B cell (primary cell): ENCODE measurements at regions of chr12 and their contacts with region 1.

Region 1: DNA sequence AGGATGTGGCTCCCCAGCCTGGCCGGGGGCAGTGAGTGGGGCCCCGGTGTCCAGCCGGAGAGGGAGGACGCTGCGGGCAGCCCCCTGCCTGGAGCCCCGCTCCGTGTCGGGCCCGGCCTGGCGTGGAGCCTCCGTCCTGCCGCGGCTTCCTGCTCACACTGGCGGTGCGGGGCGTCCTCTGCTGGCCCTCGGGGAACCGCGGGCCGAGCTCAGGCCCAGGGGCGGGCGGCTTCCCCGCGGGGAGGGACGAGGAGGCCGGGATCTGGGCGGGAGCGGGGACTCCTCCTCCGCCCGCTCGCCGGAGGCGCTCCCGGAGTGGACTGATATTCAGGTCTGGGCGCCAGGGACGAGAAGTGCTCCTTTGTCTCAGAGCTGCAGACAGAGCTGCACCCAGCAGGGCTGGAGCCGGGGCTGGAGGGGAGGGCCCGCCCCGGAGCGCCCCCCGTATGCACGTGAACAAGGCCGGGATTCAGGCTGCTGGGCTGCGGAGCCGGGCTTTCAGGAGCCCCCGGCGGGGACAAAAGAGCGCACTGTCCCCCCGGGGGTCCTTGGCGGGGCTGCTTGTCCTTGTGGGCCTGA is 2.2 kb downstream of the MMP17 start:
- DNase-seq: peak; percentile 76
- ATAC-seq: peak; percentile 46
- H3K4me3 ChIP-seq: peak overlapping the region in 4 of 5 experiments; percentile 60 to 75 (median 67)
- H3K4me3 Mint-ChIP-seq: peak overlapping the region; percentile 79
- H3K27ac ChIP-seq: no peak overlapping the region
- H3K27ac Mint-ChIP-seq: peak overlapping the region; percentile 20
- H3K4me1 ChIP-seq: peaks cover 26 to 31% of the 10 kb centered on the region in 2 donors
- H3K4me1 Mint-ChIP-seq: peaks cover 33% of the 10 kb centered on the region
- H3K27me3 ChIP-seq: peaks cover 0 to 17% (median 8%) of the 10 kb centered on the region in 4 experiments
- H3K27me3 Mint-ChIP-seq: peaks cover 14% of the 10 kb centered on the region
- CTCF ChIP-seq: peak; percentile 69

Region 2: DNA sequence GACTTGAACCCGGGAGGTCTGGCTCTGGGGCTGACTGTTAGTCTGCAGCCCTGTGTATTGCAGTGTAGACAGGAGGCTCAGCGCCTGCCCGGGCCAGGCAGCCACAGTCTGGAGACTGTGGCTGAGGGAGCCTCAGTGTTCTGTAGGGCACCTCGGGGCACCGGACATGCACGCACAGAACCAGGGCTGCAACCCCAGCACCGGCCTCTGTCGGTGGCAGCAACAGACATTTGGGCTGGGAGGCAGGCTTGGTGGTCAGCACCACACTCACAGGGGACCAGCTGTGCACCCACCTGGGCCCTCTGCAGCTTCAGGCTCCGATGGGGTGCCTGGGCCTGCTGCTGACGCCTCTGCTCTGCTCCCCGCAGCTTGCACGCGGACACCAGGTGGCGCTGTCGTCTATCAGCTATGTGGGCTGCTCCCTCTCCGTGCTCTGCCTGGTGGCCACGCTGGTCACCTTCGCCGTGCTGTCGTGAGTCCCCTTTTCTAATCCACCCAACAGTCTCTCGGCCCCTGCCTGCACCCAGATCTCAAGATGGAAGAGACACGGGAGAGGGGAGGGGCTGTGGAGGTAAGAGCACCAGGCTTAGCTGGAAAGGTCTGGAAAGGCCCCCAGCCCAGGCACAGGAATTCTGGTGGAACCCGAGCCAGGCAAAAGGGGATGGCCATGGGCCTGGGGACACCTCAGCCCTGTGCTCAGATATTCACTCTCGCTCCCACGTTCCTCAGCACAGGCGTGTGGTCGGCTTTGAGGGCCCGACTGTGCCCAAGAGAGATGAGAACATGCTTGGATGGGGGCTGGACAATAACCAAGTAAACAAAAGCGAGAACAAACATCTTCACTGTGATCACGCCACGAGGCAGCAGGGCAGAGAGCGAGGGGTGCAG is 725.7 kb before region 1 on chr12:
- CTCF ChIA-PET with region 1: interaction called, 32 read pairs
- POLR2A ChIA-PET with region 1: no interaction called
- intact Hi-C with region 1: no loop called
- DNase-seq: peak; percentile 78
- ATAC-seq: peak; percentile 77
- H3K4me3 ChIP-seq: no peak overlapping the region
- H3K4me3 Mint-ChIP-seq: no peak overlapping the region
- H3K27ac ChIP-seq: no peak overlapping the region
- H3K27ac Mint-ChIP-seq: no peak overlapping the region
- H3K4me1 ChIP-seq: peaks cover 14 to 47% of the 10 kb centered on the region in 2 donors
- H3K4me1 Mint-ChIP-seq: peaks cover 17% of the 10 kb centered on the region
- H3K27me3 ChIP-seq: no peaks in the 10 kb centered on the region
- H3K27me3 Mint-ChIP-seq: peaks cover 4% of the 10 kb centered on the region
- CTCF ChIP-seq: peak; percentile 87

Region 3: GRCh38 chr12:131371401-131372170 is 458.8 kb before region 1 on chr12:
- CTCF ChIA-PET with region 1: no interaction called
- POLR2A ChIA-PET with region 1: no interaction called
- intact Hi-C with region 1: no loop called
- DNase-seq: no peak
- ATAC-seq: no peak
- H3K4me3 ChIP-seq: no peak overlapping the region
- H3K4me3 Mint-ChIP-seq: no peak overlapping the region
- H3K27ac ChIP-seq: no peak overlapping the region
- H3K27ac Mint-ChIP-seq: no peak overlapping the region
- H3K4me1 ChIP-seq: no peaks in the 10 kb centered on the region
- H3K4me1 Mint-ChIP-seq: no peaks in the 10 kb centered on the region
- H3K27me3 ChIP-seq: no peaks in the 10 kb centered on the region
- H3K27me3 Mint-ChIP-seq: no peaks in the 10 kb centered on the region
- CTCF ChIP-seq: no peak

Region 4: GRCh38 chr12:131536337-131536736 is 294.1 kb before region 1 on chr12:
- CTCF ChIA-PET with region 1: no interaction called
- POLR2A ChIA-PET with region 1: no interaction called
- intact Hi-C with region 1: no loop called
- DNase-seq: no peak
- ATAC-seq: no peak
- H3K4me3 ChIP-seq: no peak overlapping the region
- H3K4me3 Mint-ChIP-seq: no peak overlapping the region
- H3K27ac ChIP-seq: no peak overlapping the region
- H3K27ac Mint-ChIP-seq: no peak overlapping the region
- H3K4me1 ChIP-seq: no peaks in the 10 kb centered on the region
- H3K4me1 Mint-ChIP-seq: no peaks in the 10 kb centered on the region
- H3K27me3 ChIP-seq: peaks cover 0 to 5% (median 3%) of the 10 kb centered on the region in 4 experiments
- H3K27me3 Mint-ChIP-seq: peaks cover 15% of the 10 kb centered on the region
- CTCF ChIP-seq: no peak

Region 5: GRCh38 chr12:131608740-131609690 is 221.4 kb before region 1 on chr12:
- CTCF ChIA-PET with region 1: interaction called, 6 read pairs
- POLR2A ChIA-PET with region 1: interaction called, 6 read pairs
- intact Hi-C with region 1: loop called (anchors 10 kb)
- DNase-seq: peak; percentile 71
- ATAC-seq: no peak
- H3K4me3 ChIP-seq: no peak overlapping the region
- H3K4me3 Mint-ChIP-seq: no peak overlapping the region
- H3K27ac ChIP-seq: no peak overlapping the region
- H3K27ac Mint-ChIP-seq: no peak overlapping the region
- H3K4me1 ChIP-seq: peaks cover 24 to 30% of the 10 kb centered on the region in 2 donors
- H3K4me1 Mint-ChIP-seq: peaks cover 12% of the 10 kb centered on the region
- H3K27me3 ChIP-seq: peaks cover 0 to 17% (median 10%) of the 10 kb centered on the region in 4 experiments
- H3K27me3 Mint-ChIP-seq: peaks cover 44% of the 10 kb centered on the region
- CTCF ChIP-seq: peak; percentile 78

Region 6: DNA sequence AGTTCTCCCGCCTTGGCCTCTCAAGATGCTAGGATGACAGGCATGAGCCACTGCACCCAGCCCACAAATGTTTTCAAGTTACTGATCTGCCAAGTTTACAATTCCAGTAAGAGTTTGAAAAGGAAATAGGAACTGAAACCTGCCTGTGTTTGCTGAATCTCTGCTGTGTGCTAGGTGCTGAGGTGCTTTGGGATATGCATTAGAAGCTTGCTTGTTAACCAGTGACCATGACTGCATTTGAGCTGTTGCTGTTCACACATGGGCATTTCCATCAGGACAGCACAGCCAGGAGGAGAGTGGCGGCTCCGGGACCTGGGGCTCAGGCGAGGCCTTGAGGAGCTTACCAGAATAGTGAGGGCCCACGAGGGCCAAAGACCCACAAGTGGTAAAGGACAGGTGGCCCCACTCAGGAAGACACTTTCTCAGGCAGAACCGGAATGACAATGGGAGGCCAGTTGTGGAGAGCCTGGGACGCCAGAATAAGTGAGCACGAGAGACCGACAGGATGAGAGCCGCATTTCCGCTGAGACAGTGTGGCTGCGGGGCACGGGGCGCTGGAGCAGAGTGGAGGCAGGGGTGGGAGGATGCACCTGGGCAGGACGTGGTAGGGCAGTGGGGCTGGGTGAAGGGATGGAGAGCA is 56.7 kb before region 1 on chr12:
- CTCF ChIA-PET with region 1: interaction called, 14 read pairs
- POLR2A ChIA-PET with region 1: interaction called, 5 read pairs
- intact Hi-C with region 1: no loop called
- DNase-seq: peak; percentile 76
- ATAC-seq: peak; percentile 74
- H3K4me3 ChIP-seq: peak overlapping the region in 4 of 5 experiments; percentile 30 to 60 (median 50)
- H3K4me3 Mint-ChIP-seq: peak overlapping the region; percentile 91
- H3K27ac ChIP-seq: peak overlapping the region; percentile 93 to 97
- H3K27ac Mint-ChIP-seq: peak overlapping the region; percentile 97
- H3K4me1 ChIP-seq: peaks cover 62 to 68% of the 10 kb centered on the region in 2 donors
- H3K4me1 Mint-ChIP-seq: peaks cover 78% of the 10 kb centered on the region
- H3K27me3 ChIP-seq: no peaks in the 10 kb centered on the region
- H3K27me3 Mint-ChIP-seq: no peaks in the 10 kb centered on the region
- CTCF ChIP-seq: no peak

Region 7: DNA sequence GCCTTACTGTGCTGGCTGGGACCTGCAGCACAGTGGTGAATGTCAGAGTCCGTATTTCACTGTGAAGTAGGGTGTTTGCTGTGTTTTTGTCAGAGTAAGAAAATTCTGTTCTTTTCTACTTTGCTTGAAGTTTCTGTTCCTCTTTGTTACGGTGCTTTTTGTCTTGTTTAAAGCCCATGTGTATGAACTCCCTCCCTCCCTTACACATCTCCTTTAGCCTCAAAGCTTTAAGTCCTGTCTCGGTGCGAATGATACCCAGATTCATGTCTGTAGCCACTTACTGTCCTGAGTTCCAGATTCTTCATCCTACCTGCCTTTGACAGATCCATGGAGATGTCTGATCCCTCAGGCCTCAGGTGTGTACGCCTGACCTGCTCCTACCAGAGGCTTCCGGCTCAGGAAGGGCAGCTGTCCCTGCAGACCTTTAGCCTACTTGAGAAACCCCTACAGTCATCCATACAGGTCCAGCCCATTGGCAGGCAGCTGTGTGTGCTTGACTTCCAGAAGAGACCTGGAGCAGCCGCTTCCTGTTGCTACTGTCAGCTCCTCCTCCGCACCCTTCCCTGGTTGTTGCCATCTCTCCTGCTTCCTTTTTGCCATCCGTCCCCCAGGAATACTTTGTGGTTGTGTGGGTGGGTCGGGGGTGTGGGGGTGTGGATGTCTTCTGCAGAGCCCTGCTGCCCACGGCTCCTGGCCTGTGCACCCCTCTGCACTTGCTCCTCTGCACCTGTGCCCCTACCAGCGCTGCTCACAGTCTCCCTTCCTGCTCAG is 240.8 kb after region 1 on chr12:
- CTCF ChIA-PET with region 1: no interaction called
- POLR2A ChIA-PET with region 1: no interaction called
- intact Hi-C with region 1: no loop called
- DNase-seq: peak; percentile 78
- ATAC-seq: peak; percentile 78
- H3K4me3 ChIP-seq: peak overlapping the region in 4 of 5 experiments; percentile 41 to 62 (median 57)
- H3K4me3 Mint-ChIP-seq: peak overlapping the region; percentile 80
- H3K27ac ChIP-seq: peak overlapping the region; percentile 74 to 80
- H3K27ac Mint-ChIP-seq: peak overlapping the region; percentile 93
- H3K4me1 ChIP-seq: peaks cover 75 to 83% of the 10 kb centered on the region in 2 donors
- H3K4me1 Mint-ChIP-seq: peaks cover 77% of the 10 kb centered on the region
- H3K27me3 ChIP-seq: no peaks in the 10 kb centered on the region
- H3K27me3 Mint-ChIP-seq: no peaks in the 10 kb centered on the region
- CTCF ChIP-seq: no peak